K562 (cell line): ENCODE measurements at regions of chr5 and their contacts with region 1.

Region 1: DNA sequence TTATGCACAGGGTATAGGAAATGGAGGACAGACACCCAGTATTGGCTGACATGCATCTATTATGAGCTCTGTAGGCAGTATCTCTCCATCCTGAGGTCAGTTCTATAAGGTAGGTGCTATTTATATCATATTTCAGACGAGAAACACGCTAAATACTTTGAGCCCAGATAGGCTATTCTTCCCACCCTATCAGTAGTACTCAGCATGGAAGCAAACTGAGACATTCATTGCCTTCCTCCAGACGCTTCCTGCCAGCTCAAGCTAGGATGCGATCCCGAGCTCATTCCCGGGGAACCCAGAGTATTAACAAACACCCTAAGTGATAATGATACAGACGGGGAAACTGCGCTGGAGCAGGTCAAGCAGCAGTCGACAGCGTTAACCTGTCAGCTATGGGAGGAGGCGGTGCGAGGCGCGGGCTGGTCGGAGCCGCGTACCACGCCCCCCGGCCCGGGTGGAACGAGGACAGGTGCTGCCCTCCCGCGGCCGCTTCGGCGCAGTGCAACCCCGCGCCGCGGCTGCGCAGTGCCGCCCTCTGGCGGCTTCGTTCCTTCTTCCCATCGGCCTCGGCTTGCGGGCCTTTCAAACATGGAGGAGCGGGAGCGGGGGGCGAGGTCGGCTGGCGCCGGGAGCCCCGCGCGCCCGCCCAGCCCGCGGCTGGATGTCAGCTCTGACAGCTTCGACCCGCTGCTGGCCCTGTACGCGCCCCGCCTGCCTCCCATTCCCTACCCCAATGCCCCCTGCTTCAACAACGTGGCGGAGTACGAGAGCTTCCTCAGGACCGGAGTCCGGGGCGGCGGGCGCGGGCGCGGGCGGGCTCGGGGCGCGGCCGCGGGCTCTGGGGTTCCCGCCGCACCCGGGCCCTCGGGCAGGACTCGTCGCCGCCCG is at the start of gene LSM11:
- DNase-seq: peak; percentile 92 to 95 (median 94)
- ATAC-seq: peak; percentile 95
- H3K4me3 ChIP-seq: peak within 1 kb of the TSS; percentile 72
- H3K27ac ChIP-seq: peak within 1 kb of the TSS; percentile 59; the same call in 2 of the 3 replicates
- H3K4me1 ChIP-seq: peaks cover 19 to 27% of the 10 kb centered on the region in 2 experiments; a peak in 4 of 5 replicates
- H3K27me3 ChIP-seq: no peaks in the 10 kb centered on the region
- CTCF ChIP-seq: peak; percentile 99 to 100 (median 100)
- EP300 ChIP-seq: no peak
- POLR2A ChIP-seq: 0 out of 2 replicates have a peak, but pooled peaks have one; percentile 34
- RAD21 ChIP-seq: peak; percentile 97
- polyA plus RNA-seq, gene LSM11: 1.8 to 2.6 TPM

Region 2: DNA sequence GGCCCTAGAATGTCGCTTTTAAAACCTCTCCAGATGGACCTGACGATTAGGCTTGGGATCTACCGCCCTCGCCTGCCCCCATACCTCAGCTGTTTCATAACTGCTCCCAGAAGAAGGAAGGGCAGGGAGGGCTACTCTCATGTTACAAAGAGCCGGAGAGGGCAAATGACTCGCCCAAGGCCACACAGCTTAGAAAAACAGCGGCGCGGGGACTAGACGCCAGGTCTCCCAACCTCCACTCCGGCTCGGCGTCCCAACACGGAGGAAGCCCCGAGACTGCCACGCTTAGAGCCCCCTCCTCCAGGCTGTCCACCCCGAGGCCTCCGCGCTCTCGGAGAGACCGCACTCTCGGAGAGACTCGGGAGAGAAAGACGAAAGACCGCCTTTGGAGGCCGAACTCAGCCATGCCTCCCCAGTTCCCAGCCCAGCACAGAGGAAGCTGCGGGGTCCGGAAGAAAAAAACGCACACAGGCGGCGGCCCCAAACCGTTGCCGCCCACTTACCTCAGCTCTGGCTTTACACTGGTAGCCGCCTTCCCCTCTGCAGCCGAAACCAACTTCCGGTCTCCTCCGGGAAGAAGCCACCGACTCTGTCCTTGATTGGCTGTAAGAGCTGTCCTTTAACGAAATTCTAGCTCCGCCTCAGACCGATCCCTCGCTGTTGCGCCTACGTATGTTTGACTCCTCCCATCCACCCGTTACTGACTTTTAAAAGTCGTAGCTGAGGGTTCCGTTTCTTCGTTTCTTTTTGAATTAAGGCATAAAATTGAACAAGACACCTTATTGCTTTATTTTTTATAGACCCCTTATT is 600.9 kb before region 1 on chr5 and contains the start of gene MED7:
- CTCF ChIA-PET with region 1: no interaction called
- POLR2A ChIA-PET with region 1: no interaction called
- in situ Hi-C with region 1: no loop called
- intact Hi-C with region 1: loop called (anchors 10 kb)
- DNase-seq: peak; percentile 97 to 98 (median 98)
- ATAC-seq: peak; percentile 99
- H3K4me3 ChIP-seq: peak within 1 kb of the TSS; percentile 80
- H3K27ac ChIP-seq: peak within 1 kb of the TSS; percentile 94
- H3K4me1 ChIP-seq: peaks cover 5 to 8% of the 10 kb centered on the region in 2 experiments
- H3K27me3 ChIP-seq: no peaks in the 10 kb centered on the region
- CTCF ChIP-seq: no peak
- EP300 ChIP-seq: peak; percentile 13
- POLR2A ChIP-seq: peak; percentile 88
- RAD21 ChIP-seq: no peak
- polyA plus RNA-seq, gene MED7: 37.1 to 38.7 TPM

Region 3: GRCh38 chr5:157328277-157328912 is 415.0 kb before region 1 on chr5:
- CTCF ChIA-PET with region 1: interaction called, 22 read pairs
- POLR2A ChIA-PET with region 1: no interaction called
- in situ Hi-C with region 1: no loop called
- intact Hi-C with region 1: loop called (anchors 2 kb)
- DNase-seq: peak; percentile 77 to 87 (median 82)
- ATAC-seq: peak; percentile 100
- H3K4me3 ChIP-seq: no peak overlapping the region
- H3K27ac ChIP-seq: no peak overlapping the region
- H3K4me1 ChIP-seq: no peaks in the 10 kb centered on the region; a peak in 1 of 5 replicates
- H3K27me3 ChIP-seq: peaks cover 0 to 31% of the 10 kb centered on the region in 2 experiments; a peak in 2 of 5 replicates
- CTCF ChIP-seq: peak; percentile 86 to 94 (median 90)
- EP300 ChIP-seq: no peak
- POLR2A ChIP-seq: no peak
- RAD21 ChIP-seq: peak; percentile 81 to 84

Region 4: GRCh38 chr5:157431544-157432200 is 311.7 kb before region 1 on chr5:
- CTCF ChIA-PET with region 1: interaction called, 23 read pairs
- POLR2A ChIA-PET with region 1: no interaction called
- in situ Hi-C with region 1: no loop called
- intact Hi-C with region 1: loop called (anchors 5 kb)
- DNase-seq: peak in 1 of 4 experiments; percentile 43
- ATAC-seq: peak; percentile 81
- H3K4me3 ChIP-seq: no peak overlapping the region
- H3K27ac ChIP-seq: no peak overlapping the region
- H3K4me1 ChIP-seq: no peaks in the 10 kb centered on the region
- H3K27me3 ChIP-seq: no peaks in the 10 kb centered on the region
- CTCF ChIP-seq: peak; percentile 54 to 63 (median 55)
- EP300 ChIP-seq: no peak
- POLR2A ChIP-seq: no peak
- RAD21 ChIP-seq: peak; percentile 75 to 77

Region 5: DNA sequence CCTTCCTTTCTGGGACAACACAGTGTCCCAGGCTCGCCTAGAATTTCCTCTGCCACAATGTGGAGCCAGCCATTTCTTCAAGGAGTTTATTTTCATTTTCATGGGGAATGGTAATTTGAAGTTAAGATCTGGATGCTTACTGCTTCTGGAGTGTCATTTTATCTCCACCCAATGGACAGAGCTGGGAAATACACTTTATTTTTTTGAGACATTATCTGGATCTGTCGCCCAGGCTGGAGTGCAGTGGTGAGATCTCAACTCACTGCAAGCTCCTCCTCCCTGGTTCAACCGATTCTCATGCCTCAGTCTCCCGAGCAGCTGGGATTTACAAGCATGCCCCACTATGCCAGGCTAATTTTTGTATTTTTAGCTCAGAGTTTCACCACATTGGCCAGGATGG is 24.9 kb before region 1 on chr5:
- CTCF ChIA-PET with region 1: no interaction called
- POLR2A ChIA-PET with region 1: interaction called, 3 read pairs
- in situ Hi-C with region 1: no loop called
- intact Hi-C with region 1: loop called (anchors 1 kb)
- DNase-seq: peak; percentile 22 to 62 (median 42)
- ATAC-seq: peak; percentile 96
- H3K4me3 ChIP-seq: no peak overlapping the region
- H3K27ac ChIP-seq: no peak overlapping the region
- H3K4me1 ChIP-seq: peaks cover 3 to 5% of the 10 kb centered on the region in 2 experiments; a peak in 2 of 5 replicates
- H3K27me3 ChIP-seq: no peaks in the 10 kb centered on the region
- CTCF ChIP-seq: peak; percentile 51 to 75 (median 54); a peak in 4 of 6 replicates
- EP300 ChIP-seq: no peak
- POLR2A ChIP-seq: no peak
- RAD21 ChIP-seq: peak; percentile 76 to 83